Left colon (tissue), 2 donors: ENCODE measurements at regions of chr4 and their contacts with region 1.

Region 1: GRCh38 chr4:107913281-107913899 is 18.0 kb upstream of the CYP2U1 start:
- DNase-seq: no peak
- ATAC-seq: peak; percentile 80

Region 2: DNA sequence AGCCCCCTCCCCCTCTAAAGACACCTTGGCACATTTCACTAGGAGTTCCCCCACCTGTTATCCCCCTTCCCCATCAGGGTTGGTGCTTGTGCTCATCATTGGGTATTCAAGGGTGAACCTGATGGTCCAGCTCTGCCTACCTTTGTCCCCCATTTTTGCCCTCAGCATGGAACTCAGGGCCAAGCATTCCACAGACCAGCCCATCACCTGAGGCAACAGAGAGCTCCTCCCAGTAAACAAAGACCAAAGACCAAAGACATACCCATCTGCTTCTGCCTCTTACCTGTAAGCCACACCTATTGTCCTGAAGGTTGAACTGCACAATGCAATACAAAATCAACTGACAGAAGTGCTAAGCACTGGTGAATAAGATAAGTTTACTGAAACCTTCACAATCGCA is 430.9 kb before region 1 on chr4:
- intact Hi-C with region 1: no loop called
- DNase-seq: no peak
- ATAC-seq: no peak

Region 3: DNA sequence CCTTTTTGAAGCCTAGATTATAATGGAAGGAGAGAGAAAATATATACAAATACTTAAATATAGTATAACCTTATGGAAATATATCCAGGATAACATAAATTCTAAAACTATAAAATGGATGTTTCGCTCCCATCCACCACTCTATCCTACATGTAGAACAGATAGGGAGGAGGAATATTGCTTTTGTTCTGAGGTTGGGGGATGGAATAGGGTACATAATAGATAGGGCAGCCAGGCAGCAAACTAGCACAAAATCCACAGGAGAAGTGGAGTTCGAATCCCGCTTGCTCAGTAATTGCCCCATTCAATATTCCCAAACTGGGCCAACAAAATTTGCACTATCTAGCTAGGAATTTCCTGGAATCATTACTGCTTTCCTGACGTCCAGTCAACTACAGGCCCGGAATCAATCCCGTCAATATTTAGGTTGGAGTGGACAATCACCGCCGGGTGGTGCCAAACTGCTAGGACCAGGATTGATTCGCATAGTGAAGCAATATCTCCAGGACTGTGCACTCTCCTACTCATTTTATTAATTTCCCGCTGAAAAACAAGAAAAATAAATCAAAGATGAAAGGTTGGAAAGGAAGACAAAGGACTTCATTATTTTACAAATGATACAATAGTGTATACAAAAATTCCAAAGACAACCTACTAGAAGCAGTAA is 153.0 kb before region 1 on chr4:
- intact Hi-C with region 1: loop called (anchors 2 to 10 kb)
- DNase-seq: peak; percentile 50 to 67
- ATAC-seq: peak; percentile 96

Region 4: DNA sequence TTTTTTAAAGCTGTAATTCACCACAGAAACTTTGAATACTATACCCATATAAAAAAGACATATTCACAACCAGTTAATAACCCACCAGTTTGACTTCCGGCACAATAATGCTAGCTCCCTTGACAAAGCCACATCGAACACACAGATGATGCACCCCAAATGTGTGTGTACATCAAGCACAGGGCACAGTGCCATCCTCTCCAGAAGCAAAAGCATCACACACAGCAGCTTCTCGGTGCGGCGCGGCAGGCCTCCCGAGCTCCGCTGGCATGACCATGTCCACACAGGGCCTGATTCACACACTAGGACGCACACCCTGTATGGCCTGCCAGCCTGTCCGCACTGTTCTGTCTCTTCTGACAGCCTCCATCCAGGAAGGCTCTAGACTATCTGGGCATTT is 167.4 kb after region 1 on chr4:
- intact Hi-C with region 1: no loop called
- DNase-seq: no peak
- ATAC-seq: no peak